ENCODE measurements at regions of chr9 and their contacts with region 1.

Region 1: GRCh38 chr9:36214571-36214970 is 23.9 kb downstream of the CLTA start:
- DNase-seq: peak; percentile 71
- ATAC-seq: peak; percentile 66
- H3K4me3 ChIP-seq: no peak overlapping the region
- H3K27ac ChIP-seq: no peak overlapping the region
- H3K4me1 ChIP-seq: peaks cover 9% of the 10 kb centered on the region
- H3K27me3 ChIP-seq: no peaks in the 10 kb centered on the region
- CTCF ChIP-seq: no peak
- POLR2A ChIP-seq: no peak
- RAD21 ChIP-seq: no peak

Region 2: DNA sequence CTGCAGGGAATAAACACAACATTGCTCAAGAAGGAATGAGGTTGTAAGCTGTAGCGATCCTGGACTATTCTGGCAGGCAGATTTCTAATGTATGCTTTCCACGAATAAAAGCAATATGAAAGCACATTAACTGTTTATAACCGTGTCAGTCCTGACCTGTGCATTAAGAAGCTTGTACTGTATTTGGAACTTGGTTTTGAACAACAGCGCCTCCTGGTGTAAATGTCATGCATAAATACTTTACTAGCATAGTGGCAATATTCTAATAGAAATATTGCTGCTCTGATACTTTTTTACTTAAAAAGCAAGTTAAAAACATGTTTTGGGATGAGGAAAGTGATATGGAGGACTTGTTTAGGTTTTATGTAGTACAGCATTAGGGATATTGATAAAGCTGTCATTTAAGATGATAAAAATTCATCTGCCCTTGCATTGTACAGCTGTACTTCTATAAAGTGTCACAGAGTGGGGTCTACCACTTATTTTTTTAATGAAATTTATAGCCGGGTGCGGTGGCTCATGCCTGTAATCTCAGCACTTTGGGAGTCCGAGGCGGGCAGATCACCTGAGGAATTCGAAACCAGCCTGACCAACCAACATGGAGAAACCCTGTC is 114.3 kb after region 1 on chr9:
- CTCF ChIA-PET with region 1: no interaction called
- POLR2A ChIA-PET with region 1: no interaction called
- dilution Hi-C with region 1: no loop called
- in situ Hi-C with region 1: no loop called
- intact Hi-C with region 1: loop called (anchors 5 kb)
- DNase-seq: peak; percentile 80
- ATAC-seq: peak; percentile 71
- H3K4me3 ChIP-seq: peak overlapping the region; percentile 4; the same call in 1 of the 2 replicates
- H3K27ac ChIP-seq: no peak overlapping the region
- H3K4me1 ChIP-seq: peaks cover 3% of the 10 kb centered on the region
- H3K27me3 ChIP-seq: no peaks in the 10 kb centered on the region
- CTCF ChIP-seq: peak; percentile 80
- POLR2A ChIP-seq: no peak
- RAD21 ChIP-seq: peak; percentile 80